OCI-LY7 (cell line): ENCODE measurements at regions of chr5 and their contacts with region 1.

Region 1: DNA sequence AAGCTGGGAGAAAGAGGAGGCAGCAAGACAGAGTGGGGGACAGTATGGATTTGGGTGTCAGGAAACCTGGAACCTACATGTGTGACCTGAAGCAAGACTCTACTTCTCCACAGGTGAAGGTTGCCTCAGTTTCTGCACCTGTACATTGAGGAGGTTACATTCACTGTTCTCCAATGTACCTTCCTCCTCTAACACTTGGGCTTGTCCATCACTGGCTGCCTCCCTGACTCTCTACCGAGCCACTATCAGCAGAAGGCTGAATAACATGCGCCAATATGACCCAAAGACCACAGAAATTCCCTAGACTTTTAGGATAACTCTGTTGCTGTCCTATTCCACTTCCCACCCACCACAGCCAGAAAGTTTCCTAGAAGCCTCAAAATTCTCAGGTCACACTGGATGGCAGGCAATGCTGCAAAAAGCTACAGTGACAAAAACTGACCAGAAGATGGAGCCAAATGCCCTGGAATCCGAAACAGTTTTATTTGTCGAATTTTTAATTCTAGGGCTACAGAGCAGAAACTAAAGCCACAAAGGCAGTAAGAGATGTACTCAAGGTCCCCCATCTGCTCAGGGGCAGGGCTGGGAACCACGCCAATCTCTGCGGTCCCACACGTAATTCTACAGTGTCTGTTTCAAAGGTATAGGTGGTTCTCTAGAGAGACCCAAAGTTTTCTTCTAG is 64.4 kb downstream of the FAM114A2 start:
- DNase-seq: peak; percentile 51
- H3K4me3 ChIP-seq: no peak overlapping the region
- H3K27ac ChIP-seq: no peak overlapping the region
- H3K4me1 ChIP-seq: no peaks in the 10 kb centered on the region
- CTCF ChIP-seq: peak; percentile 93

Region 2: DNA sequence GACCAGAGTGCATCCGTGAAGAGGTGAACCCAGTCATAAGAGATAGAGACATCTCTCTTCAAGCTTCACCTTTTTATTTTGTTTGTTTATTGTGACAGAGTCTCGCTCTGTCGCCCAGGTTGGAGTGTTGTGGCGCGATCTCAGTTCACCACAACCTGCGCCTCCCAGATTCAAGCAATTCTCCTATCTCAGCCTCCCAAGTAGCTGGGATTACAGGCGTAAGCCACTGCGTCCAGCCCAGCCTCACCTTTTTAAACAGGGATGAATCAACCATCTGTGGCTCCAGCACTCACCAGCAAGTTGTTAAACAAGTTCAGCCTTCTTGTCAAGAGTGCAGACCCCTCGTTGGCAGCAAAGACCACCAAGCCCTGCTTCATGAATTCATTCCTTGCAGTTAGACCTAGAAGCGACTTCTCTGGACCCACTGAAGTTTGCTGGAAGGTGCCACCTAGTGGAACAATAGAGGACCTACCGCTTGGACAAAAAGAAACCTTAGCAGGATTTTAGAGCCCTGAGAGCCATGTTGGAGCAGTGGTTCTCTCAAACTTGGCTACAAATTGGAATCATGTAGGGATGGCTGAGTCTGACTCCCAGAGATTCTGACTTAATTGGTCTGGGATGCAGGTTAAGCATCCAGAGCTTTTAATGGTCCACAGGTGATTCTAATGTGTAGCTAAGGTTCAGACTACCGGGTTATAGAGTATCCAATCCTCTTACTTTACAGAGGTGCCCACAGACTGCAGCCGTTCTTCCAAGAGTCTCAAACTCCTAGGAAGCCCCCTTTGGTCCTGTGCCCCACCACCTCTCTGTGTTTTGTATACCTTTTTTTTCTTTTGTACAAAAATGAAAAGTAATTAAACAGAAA is 205.8 kb after region 1 on chr5:
- CTCF ChIA-PET with region 1: no interaction called
- POLR2A ChIA-PET with region 1: no interaction called
- intact Hi-C with region 1: loop called (anchors 2 kb)
- DNase-seq: peak; percentile 71
- H3K4me3 ChIP-seq: no peak overlapping the region
- H3K27ac ChIP-seq: no peak overlapping the region
- H3K4me1 ChIP-seq: no peaks in the 10 kb centered on the region
- CTCF ChIP-seq: peak; percentile 84